Mammary epithelial cell (primary cell): ENCODE measurements at regions of chr12 and their contacts with region 1.

Region 1: DNA sequence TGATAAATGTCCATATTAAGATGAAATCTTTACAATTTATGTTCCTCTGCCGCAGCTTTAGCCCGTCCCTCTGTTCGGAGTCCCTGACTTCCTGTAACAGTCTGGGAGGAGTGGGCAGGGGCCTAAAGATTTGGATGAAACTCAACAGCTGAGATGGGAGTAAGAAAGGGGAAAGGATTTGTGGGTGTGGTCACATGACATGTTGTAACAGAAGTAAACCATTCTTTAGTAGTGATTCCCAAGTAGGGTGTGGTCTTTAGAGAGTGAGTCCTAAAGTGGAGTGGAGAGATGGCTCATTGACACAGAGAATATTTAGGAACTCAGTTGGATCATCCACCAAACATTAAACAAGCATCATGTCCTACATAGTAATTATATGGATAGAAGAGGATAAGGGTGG is 12.9 kb downstream of the TMEM117 start:
- DNase-seq: peak; percentile 68
- H3K4me3 ChIP-seq: no peak overlapping the region
- H3K27ac ChIP-seq: peak overlapping the region; percentile 90
- H3K4me1 ChIP-seq: peaks cover 26% of the 10 kb centered on the region
- H3K27me3 ChIP-seq: no peaks in the 10 kb centered on the region
- CTCF ChIP-seq: no peak

Region 2: DNA sequence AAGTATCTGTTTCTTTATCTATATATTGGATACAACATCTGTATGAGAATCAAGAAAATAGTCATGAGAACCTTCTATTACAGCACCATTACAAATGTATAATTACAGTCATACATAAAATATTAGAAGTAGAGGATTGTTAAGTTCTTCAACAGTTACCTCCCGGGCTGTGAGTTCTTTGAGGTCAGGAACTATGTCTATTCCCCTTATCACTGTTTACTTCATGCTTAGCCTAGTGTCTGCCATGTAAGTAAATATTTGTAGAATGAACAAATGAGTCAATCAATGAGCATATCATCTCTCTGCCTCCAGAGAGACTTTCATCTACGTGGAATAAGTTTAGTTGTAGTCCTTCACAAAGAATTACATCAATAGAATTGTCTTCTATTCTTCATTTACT is 137.4 kb before region 1 on chr12:
- CTCF ChIA-PET with region 1: no interaction called
- dilution Hi-C with region 1: no loop called
- in situ Hi-C with region 1: no loop called
- intact Hi-C with region 1: no loop called
- DNase-seq: no peak
- H3K4me3 ChIP-seq: no peak overlapping the region
- H3K27ac ChIP-seq: no peak overlapping the region
- H3K4me1 ChIP-seq: no peaks in the 10 kb centered on the region
- H3K27me3 ChIP-seq: peaks cover 9% of the 10 kb centered on the region
- CTCF ChIP-seq: no peak

Region 3: DNA sequence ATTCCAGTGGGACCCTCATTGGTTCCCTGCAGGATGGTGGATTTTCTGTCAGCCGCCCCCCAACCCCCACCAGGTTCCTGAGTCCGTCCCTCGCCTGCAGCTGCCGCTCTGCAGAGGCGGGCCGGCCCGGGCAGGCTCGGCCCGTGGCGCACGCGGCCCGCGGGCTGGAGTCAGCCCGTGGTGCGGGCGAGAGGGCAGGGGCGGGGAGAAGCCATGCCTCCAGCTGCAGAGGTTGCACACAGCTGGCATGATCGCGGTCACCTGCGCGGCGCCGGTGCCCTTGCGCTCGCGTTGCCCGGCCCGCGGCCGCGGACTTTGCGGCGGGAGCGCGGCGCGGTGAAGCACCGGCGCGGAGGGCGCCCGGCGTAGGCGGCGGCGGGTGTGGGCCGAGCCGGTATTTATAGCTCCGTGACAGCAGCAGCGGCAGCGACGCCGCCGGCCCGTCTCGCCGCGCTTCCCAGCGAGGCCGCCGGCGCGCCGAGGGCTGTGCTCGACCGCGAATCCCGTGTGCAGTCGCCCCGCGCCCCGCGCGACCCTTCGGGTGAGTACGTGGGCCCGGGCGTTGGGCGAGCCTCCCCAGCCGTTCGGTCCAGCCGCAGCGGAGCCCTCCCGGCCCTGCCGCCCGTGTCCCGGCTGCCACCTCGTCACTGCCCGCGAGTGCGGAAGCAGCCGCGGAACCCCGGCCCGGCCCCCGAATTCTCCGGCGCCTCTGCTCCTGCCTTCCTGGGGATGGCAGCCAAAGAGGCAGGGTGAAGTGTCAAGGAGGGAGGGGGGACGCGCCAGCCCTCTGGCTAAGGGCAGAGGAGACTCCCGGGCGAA is 12.9 kb before region 1 on chr12 and contains the start of gene TMEM117:
- CTCF ChIA-PET with region 1: no interaction called
- dilution Hi-C with region 1: no loop called
- in situ Hi-C with region 1: no loop called
- intact Hi-C with region 1: loop called (anchors 1 kb)
- DNase-seq: peak; percentile 59
- H3K4me3 ChIP-seq: peak within 1 kb of the TSS; percentile 76 to 89 (median 86)
- H3K27ac ChIP-seq: peak within 1 kb of the TSS; percentile 83
- H3K4me1 ChIP-seq: peaks cover 11% of the 10 kb centered on the region
- H3K27me3 ChIP-seq: no peaks in the 10 kb centered on the region
- CTCF ChIP-seq: no peak
- total RNA-seq, gene TMEM117: 20.8 to 26.5 TPM